Activated T-helper 2 cell treated with anti-CD3 and anti-CD28 coated beads, Interferon-gamma antibody, Interleukin-2, Interleukin-4, amounts not matched to agents 10 μg/mL and 5 μg/mL and 100 μg/mL, durations not matched to agents 14 hours and 24 hours and 36 hours (primary cell): ENCODE measurements at regions of chr6 and their contacts with region 1.

Region 1: DNA sequence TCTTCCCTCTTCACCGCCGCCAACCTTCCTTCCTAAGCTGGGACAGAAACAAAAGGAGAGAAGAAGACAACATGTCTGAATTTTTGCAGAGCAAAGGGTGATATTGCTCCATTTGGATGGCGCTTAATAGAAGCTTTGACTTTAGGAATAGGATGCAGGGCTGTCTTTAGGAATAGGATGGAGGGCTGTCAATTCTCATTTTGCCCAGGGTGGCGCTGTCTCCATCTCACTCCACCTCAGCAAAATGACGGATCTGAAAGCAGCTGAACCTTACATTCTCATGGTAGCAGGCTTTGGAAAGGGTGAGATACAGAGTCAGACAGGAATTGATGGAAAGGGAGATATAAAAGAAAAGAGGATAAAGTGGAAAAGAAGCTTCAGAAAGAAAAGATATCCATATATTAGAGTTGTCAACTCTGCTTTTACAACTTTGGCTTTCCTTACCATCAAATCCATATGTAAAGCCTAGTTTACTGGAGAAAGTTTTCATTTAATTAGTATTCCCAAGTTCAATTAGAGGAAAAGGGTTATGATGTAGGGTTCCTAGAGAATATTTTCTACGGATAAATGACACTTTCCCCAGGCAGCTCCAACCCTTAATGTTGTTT is 2.4 kb downstream of the MTCL3 start:
- DNase-seq: peak; percentile 50
- H3K4me3 Mint-ChIP-seq: peak overlapping the region; percentile 90
- H3K27ac Mint-ChIP-seq: peak overlapping the region; percentile 73
- H3K4me1 Mint-ChIP-seq: peaks cover 48% of the 10 kb centered on the region
- H3K27me3 Mint-ChIP-seq: peaks cover 11% of the 10 kb centered on the region

Region 2: GRCh38 chr6:127266178-127266891 is 250.4 kb before region 1 on chr6 and contains the start of gene RNF146:
- intact Hi-C with region 1: loop called (anchors 2 kb)
- DNase-seq: peak; percentile 69
- H3K4me3 Mint-ChIP-seq: peak within 1 kb of the TSS; percentile 97
- H3K27ac Mint-ChIP-seq: peak within 1 kb of the TSS; percentile 99
- H3K4me1 Mint-ChIP-seq: peaks cover 28% of the 10 kb centered on the region
- H3K27me3 Mint-ChIP-seq: peaks cover 16% of the 10 kb centered on the region
- total RNA-seq, gene RNF146: 18.7 and 19.1 TPM in 2 replicates

Region 3: GRCh38 chr6:127342946-127343808 is 173.6 kb before region 1 on chr6 and contains the start of gene ECHDC1:
- intact Hi-C with region 1: loop called (anchors 1 kb)
- DNase-seq: peak; percentile 65
- H3K4me3 Mint-ChIP-seq: no peak within 1 kb of the TSS
- H3K27ac Mint-ChIP-seq: no peak within 1 kb of the TSS
- H3K4me1 Mint-ChIP-seq: peaks cover 19% of the 10 kb centered on the region
- H3K27me3 Mint-ChIP-seq: no peaks in the 10 kb centered on the region
- total RNA-seq, gene ECHDC1: 60.9 and 61.6 TPM in 2 replicates

Region 4: GRCh38 chr6:127464881-127465459 is 51.8 kb before region 1 on chr6:
- intact Hi-C with region 1: loop called (anchors 2 kb)
- DNase-seq: peak; percentile 31
- H3K4me3 Mint-ChIP-seq: no peak overlapping the region
- H3K27ac Mint-ChIP-seq: no peak overlapping the region
- H3K4me1 Mint-ChIP-seq: peaks cover 25% of the 10 kb centered on the region
- H3K27me3 Mint-ChIP-seq: no peaks in the 10 kb centered on the region

Region 5: DNA sequence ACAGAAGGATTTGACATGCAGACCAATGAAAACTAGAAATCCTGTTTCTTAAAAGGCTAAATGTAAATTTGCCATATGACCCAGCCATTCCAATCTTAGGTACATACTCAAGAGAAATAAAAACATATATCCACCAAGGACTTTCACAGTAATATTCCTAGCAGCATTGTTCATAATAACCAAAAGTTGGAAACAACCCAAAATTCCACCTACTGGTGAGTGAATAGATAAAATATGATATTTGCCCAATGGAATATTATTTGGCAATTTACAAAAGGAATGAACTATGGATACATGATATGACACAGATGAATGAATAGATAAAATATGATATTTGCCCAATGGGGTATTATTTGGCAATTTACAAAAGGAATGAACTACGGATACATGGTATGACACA is 20.3 kb before region 1 on chr6:
- intact Hi-C with region 1: no loop called
- DNase-seq: no peak
- H3K4me3 Mint-ChIP-seq: no peak overlapping the region
- H3K27ac Mint-ChIP-seq: no peak overlapping the region
- H3K4me1 Mint-ChIP-seq: peaks cover 11% of the 10 kb centered on the region
- H3K27me3 Mint-ChIP-seq: peaks cover 2% of the 10 kb centered on the region

Region 6: DNA sequence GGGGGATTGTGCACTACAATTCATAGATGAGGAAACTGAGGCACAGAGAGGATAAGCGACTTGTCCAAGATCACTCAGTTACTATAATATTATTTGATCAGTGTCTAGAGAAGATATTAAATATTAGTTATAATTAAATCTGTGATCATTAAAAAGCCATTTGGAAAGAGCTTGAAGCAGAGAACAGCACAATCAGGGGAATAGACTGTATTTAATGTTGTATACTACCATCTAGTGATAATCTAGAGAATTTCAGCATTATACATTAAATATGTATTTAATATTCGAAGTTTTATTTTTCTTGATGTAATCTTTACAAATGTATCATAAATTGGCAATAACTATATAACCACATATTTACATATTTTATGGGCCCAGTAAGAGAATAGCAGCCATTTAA is 22.5 kb after region 1 on chr6:
- intact Hi-C with region 1: loop called (anchors 2 kb)
- DNase-seq: no peak
- H3K4me3 Mint-ChIP-seq: no peak overlapping the region
- H3K27ac Mint-ChIP-seq: no peak overlapping the region
- H3K4me1 Mint-ChIP-seq: peaks cover 2% of the 10 kb centered on the region
- H3K27me3 Mint-ChIP-seq: peaks cover 22% of the 10 kb centered on the region

Region 7: GRCh38 chr6:128952902-128953301 is 1436.1 kb after region 1 on chr6:
- intact Hi-C with region 1: no loop called
- DNase-seq: no peak
- H3K4me3 Mint-ChIP-seq: no peak overlapping the region
- H3K27ac Mint-ChIP-seq: no peak overlapping the region
- H3K4me1 Mint-ChIP-seq: no peaks in the 10 kb centered on the region
- H3K27me3 Mint-ChIP-seq: no peaks in the 10 kb centered on the region